ENCODE measurements at regions of chr14 and their contacts with region 1.

Region 1: DNA sequence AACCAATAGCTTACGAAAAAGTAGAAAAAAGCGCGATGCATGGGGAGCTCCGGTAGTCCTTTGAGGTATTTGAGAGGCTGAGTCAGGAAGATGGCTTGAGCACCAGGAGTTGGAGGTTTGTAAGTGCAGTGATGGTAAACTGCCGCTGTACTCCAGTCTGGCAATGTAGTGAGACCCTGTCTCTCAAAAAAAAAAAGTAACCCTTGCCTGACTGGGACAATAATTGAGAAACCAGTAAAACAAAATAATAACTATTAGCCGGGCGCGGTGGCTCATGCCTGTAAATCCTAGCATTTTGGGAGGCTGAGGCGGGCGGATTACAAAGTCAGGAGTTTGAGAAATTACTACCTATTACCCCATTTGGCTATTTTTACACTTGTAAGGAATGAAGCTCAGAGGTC is 632 bp upstream of the ACOT2 start:
- DNase-seq: peak in 3 of 5 donors; percentile 3 to 55 (median 6)
- H3K4me3 ChIP-seq: peak overlapping the region; percentile 28 to 63
- H3K4me3 Mint-ChIP-seq: peak overlapping the region; percentile 81 to 96 (median 94)
- H3K27ac ChIP-seq: peak overlapping the region; percentile 72
- H3K27ac Mint-ChIP-seq: peak overlapping the region; percentile 91 to 98 (median 95)
- H3K4me1 ChIP-seq: peaks cover 46% of the 10 kb centered on the region
- H3K4me1 Mint-ChIP-seq: peaks cover 27 to 55% (median 42%) of the 10 kb centered on the region in 4 donors
- H3K27me3 ChIP-seq: no peaks in the 10 kb centered on the region
- H3K27me3 Mint-ChIP-seq: no peaks in the 10 kb centered on the region

Region 2: DNA sequence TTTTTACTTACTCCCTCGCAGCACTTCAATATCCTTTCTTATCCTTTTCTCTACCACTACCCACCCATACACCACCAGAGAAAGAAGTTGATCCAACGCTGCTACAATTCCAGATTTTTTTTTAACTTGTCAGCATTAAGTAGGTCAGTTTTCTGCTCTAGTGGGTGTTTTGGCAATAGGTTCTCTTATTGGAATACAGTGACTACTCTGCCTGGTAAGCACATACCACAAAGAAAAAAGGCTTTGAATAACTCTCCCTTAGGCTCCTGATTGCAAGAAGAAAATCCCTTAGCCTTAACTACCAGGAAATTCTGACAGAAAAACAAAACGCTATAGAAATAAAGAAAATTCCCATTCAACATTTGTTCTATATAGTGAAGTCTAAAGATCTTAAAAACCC is 182.0 kb before region 1 on chr14:
- CTCF ChIA-PET with region 1: no interaction called
- POLR2A ChIA-PET with region 1: no interaction called
- intact Hi-C with region 1: no loop called
- DNase-seq: no peak
- H3K4me3 ChIP-seq: no peak overlapping the region
- H3K4me3 Mint-ChIP-seq: no peak overlapping the region
- H3K27ac ChIP-seq: no peak overlapping the region
- H3K27ac Mint-ChIP-seq: no peak overlapping the region
- H3K4me1 ChIP-seq: no peaks in the 10 kb centered on the region
- H3K4me1 Mint-ChIP-seq: peaks cover 0 to 4% (median 2%) of the 10 kb centered on the region in 4 donors
- H3K27me3 ChIP-seq: no peaks in the 10 kb centered on the region
- H3K27me3 Mint-ChIP-seq: no peaks in the 10 kb centered on the region

Region 3: GRCh38 chr14:73503648-73504047 is 64.7 kb before region 1 on chr14:
- CTCF ChIA-PET with region 1: interaction called, 90 read pairs
- POLR2A ChIA-PET with region 1: interaction called, 34 read pairs
- intact Hi-C with region 1: loop called (anchors 1 kb)
- DNase-seq: no peak
- H3K4me3 ChIP-seq: no peak overlapping the region
- H3K4me3 Mint-ChIP-seq: no peak overlapping the region
- H3K27ac ChIP-seq: no peak overlapping the region
- H3K27ac Mint-ChIP-seq: no peak overlapping the region
- H3K4me1 ChIP-seq: no peaks in the 10 kb centered on the region
- H3K4me1 Mint-ChIP-seq: peaks cover 0 to 11% (median 1%) of the 10 kb centered on the region in 4 donors
- H3K27me3 ChIP-seq: no peaks in the 10 kb centered on the region
- H3K27me3 Mint-ChIP-seq: no peaks in the 10 kb centered on the region

Region 4: DNA sequence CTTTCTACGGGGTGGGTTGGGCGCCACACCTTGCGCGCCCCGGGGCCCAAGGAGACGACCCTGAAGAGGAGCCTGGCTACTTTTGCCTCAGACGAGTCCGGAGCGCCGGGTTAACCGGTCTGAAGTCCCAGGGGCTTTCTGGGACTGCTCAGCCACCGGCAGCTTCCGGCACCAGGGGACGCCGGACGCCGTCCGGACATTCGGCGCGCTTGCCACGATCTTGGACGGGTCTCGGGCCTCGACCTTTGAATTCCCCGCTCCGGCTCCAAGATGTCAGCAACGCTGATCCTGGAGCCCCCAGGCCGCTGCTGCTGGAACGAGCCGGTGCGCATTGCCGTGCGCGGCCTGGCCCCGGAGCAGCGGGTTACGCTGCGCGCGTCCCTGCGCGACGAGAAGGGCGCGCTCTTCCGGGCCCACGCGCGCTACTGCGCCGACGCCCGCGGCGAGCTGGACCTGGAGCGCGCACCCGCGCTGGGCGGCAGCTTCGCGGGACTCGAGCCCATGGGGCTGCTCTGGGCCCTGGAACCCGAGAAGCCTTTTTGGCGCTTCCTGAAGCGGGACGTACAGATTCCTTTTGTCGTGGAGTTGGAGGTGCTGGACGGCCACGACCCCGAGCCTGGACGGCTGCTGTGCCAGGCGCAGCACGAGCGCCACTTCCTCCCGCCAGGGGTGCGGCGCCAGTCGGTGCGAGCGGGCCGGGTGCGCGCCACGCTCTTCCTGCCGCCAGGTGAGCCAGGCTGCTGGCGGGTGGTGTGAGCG is 23.5 kb after region 1 on chr14 and contains the start of gene ACOT4:
- CTCF ChIA-PET with region 1: interaction called, 18 read pairs
- POLR2A ChIA-PET with region 1: interaction called, 50 read pairs
- intact Hi-C with region 1: loop called (anchors 1 kb)
- DNase-seq: peak; percentile 64 to 76 (median 76)
- H3K4me3 ChIP-seq: peak within 1 kb of the TSS; percentile 63 to 77
- H3K4me3 Mint-ChIP-seq: peak within 1 kb of the TSS; percentile 73 to 87 (median 82)
- H3K27ac ChIP-seq: peak within 1 kb of the TSS; percentile 53
- H3K27ac Mint-ChIP-seq: peak within 1 kb of the TSS; percentile 30 to 92 (median 81)
- H3K4me1 ChIP-seq: peaks cover 10% of the 10 kb centered on the region
- H3K4me1 Mint-ChIP-seq: peaks cover 5 to 10% (median 7%) of the 10 kb centered on the region in 4 donors
- H3K27me3 ChIP-seq: no peaks in the 10 kb centered on the region
- H3K27me3 Mint-ChIP-seq: no peaks in the 10 kb centered on the region
- total RNA-seq, gene ACOT4: 1.2 to 1.5 TPM

Region 5: DNA sequence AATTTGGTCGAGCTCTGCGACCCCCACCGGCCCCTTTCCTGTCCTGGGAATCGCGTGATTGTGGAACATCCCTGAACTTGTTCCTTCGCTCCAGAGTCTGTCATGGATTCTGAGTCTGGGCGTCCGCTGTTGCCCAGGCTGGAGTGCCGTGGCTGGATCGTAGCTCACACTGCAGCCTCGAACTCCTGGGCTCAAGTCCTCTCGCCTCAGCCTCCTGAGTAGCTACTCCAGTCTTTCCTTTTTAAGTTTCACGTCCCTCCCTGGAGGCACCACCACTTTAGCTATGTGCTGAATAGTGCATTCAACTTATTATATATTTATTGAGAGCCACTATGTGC is 44.6 kb after region 1 on chr14:
- CTCF ChIA-PET with region 1: interaction called, 33 read pairs
- POLR2A ChIA-PET with region 1: interaction called, 71 read pairs
- intact Hi-C with region 1: loop called (anchors 1 kb)
- DNase-seq: no peak
- H3K4me3 ChIP-seq: peak overlapping the region; percentile 28 to 82
- H3K4me3 Mint-ChIP-seq: peak overlapping the region; percentile 85 to 90 (median 87)
- H3K27ac ChIP-seq: peak overlapping the region; percentile 40
- H3K27ac Mint-ChIP-seq: peak overlapping the region; percentile 46 to 91 (median 75)
- H3K4me1 ChIP-seq: peaks cover 3% of the 10 kb centered on the region
- H3K4me1 Mint-ChIP-seq: peaks cover 0 to 6% (median 3%) of the 10 kb centered on the region in 4 donors
- H3K27me3 ChIP-seq: no peaks in the 10 kb centered on the region
- H3K27me3 Mint-ChIP-seq: no peaks in the 10 kb centered on the region

Region 6: DNA sequence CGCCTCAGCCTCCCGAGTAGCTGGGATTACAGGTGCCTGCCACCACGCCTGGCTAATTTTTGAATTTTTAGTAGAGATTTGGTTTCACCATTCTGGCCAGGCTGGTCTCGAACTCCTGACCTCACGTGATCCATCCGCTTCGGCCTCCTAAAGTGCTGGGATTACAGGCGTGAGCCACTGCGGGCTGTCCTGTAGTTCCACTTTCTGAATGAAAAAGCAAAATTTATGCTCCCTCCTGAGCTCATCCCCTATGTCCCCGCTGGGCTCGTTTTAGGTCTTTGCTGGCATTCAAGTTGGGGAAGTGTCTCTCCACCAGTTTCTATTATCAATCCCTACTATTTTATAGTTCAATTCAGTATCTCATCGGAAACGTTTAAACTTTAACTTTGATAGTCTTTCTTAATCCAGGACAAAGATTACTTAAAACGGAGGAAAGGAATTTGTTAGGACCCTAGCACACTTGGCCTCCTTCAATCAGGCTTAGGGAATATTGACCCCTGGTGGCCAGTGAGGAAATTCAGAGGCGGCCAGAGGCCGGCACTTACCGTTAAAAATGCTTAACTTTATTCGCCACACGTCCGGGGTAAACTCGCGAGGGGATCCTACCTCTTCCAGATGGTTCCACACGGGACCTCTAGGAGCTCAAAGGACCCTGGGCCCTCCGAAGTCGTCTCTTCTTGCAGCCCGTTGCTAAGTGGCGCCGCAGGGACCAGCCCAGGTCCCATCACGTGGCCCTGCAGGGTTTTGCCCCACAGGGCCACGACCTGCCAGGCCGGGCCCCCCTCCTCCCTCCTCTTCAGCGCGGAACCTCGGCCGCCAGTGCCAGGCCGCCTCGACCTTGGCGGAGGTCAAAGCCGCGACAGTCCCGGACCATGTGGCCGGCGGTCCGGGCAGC is 65.0 kb after region 1 on chr14:
- CTCF ChIA-PET with region 1: interaction called, 23 read pairs
- POLR2A ChIA-PET with region 1: interaction called, 4 read pairs
- intact Hi-C with region 1: no loop called
- DNase-seq: peak; percentile 52 to 67 (median 57)
- H3K4me3 ChIP-seq: peak overlapping the region; percentile 11 to 57
- H3K4me3 Mint-ChIP-seq: peak overlapping the region; percentile 71 to 84 (median 80)
- H3K27ac ChIP-seq: no peak overlapping the region
- H3K27ac Mint-ChIP-seq: peak overlapping the region in 3 of 7 donors; percentile 6 to 59 (median 49)
- H3K4me1 ChIP-seq: peaks cover 8% of the 10 kb centered on the region
- H3K4me1 Mint-ChIP-seq: peaks cover 3 to 7% (median 4%) of the 10 kb centered on the region in 4 donors
- H3K27me3 ChIP-seq: no peaks in the 10 kb centered on the region
- H3K27me3 Mint-ChIP-seq: peaks cover 5 to 18% of the 10 kb centered on the region in 2 donors

Region 7: DNA sequence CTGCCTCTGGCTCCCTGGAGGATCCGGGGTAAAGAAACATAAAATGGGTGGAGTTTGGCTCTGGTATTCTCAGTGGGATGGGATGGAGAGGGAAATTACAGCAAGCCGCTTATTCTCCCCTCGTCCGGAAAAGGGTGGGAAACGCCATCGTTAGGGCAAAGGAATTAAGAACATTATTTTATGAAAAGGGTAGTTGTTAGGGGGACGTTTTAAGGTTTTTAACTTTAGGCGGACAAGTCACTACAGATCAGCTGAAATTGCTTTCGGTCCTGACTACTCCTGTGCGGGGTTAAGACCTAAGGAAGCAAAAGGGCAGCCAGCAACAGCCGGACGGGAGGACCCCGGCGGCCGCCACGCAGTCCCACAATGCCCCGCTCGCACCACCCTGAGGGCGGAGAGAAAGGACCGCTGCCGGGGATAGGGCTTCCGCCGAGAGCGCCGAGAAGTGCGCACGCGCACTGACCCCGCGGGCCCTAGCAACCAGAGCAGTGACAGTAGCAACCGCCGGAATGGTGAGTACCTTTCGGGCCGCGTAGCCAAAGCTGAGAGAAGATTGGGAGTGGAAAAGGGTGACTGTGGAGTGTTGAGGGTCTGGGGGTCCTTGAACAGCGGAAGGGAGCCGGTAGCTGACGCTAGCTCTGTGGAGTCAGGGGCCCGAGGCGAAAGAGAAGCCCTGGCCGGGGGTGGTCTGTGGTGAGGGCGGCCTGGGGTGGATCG is 76.3 kb after region 1 on chr14 and contains the start of gene DNAL1:
- CTCF ChIA-PET with region 1: interaction called, 4 read pairs
- POLR2A ChIA-PET with region 1: interaction called, 14 read pairs
- intact Hi-C with region 1: no loop called
- DNase-seq: peak; percentile 88 to 90 (median 89)
- H3K4me3 ChIP-seq: peak within 1 kb of the TSS; percentile 73 to 81
- H3K4me3 Mint-ChIP-seq: peak within 1 kb of the TSS; percentile 89 to 99 (median 95)
- H3K27ac ChIP-seq: peak within 1 kb of the TSS; percentile 64
- H3K27ac Mint-ChIP-seq: peak within 1 kb of the TSS; percentile 76 to 97 (median 97)
- H3K4me1 ChIP-seq: peaks cover 11% of the 10 kb centered on the region
- H3K4me1 Mint-ChIP-seq: peaks cover 11 to 19% (median 17%) of the 10 kb centered on the region in 4 donors
- H3K27me3 ChIP-seq: no peaks in the 10 kb centered on the region
- H3K27me3 Mint-ChIP-seq: no peaks in the 10 kb centered on the region
- total RNA-seq, gene DNAL1: 5.4 to 7.8 TPM